H1 (cell line): ENCODE measurements at regions of chr1 and their contacts with region 1.

Region 1: DNA sequence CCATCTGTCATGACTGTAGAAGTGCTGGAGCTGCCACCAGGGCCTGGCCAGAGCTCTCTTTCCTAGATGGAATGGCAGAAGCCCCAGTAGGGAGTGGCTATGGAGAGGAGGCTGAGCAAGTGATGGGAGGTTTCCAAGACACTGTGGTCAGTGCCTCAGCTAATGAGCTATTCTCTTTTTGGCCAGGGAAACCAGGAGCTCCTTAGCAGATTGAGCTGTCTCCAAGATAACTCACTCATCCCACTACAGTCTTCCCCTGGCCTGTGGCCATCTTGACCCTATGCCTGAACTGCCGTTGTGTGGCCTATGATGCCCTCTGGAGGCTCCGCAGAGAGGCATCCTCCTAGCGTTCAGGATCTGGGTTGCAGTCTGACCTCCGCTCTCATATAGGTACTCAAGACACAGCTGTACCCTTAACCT is 60.5 kb downstream of the ERI3 start:
- DNase-seq: peak in 1 of 2 experiments; percentile 61
- H3K4me3 ChIP-seq: no peak overlapping the region
- H3K27ac ChIP-seq: no peak overlapping the region
- H3K4me1 ChIP-seq: peaks cover 0 to 2% (median 0%) of the 10 kb centered on the region in 4 experiments; a peak in 1 of 7 replicates
- H3K27me3 ChIP-seq: no peaks in the 10 kb centered on the region
- CTCF ChIP-seq: peak; percentile 81 to 99 (median 89)
- EP300 ChIP-seq: no peak
- POLR2A ChIP-seq: no peak
- RAD21 ChIP-seq: peak; percentile 84 to 87

Region 2: DNA sequence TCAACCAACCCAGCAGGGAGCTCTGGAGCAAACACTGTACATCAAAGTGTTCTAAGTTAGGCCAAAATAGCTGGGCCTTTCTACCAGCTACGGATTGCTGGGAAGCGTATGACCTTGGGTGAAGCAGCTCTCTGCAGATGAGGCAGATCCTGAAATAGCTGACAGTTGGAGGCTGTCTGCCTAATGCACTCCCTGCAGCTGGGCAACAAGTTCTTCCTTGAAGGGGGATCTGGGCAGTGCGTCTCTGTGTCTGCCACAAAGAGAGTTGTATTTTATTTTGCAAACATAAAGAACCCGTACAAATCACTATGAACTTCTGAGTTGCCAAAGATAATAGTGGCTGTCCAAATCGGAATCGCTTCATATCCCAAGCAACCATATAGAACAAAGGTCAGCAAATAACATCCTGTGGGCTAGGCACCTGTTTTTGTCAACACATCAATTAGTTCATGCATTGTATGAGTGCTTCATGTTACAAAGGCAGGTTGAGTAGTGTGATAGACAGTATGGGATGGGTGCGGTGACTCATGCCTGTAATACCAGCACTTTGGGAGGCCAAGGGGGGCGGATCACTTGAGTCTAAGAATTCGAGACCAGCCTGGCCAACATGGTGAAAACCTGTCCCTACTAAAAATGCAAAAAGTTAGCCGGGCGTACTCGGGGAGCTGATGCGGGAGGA is 205.1 kb before region 1 on chr1:
- CTCF ChIA-PET with region 1: interaction called, 41 read pairs
- POLR2A ChIA-PET with region 1: no interaction called
- DNase-seq: no peak
- H3K4me3 ChIP-seq: no peak overlapping the region
- H3K27ac ChIP-seq: no peak overlapping the region
- H3K4me1 ChIP-seq: peaks cover 8 to 19% (median 13%) of the 10 kb centered on the region in 4 experiments
- H3K27me3 ChIP-seq: peaks cover 0 to 2% (median 0%) of the 10 kb centered on the region in 4 experiments; a peak in 1 of 7 replicates
- CTCF ChIP-seq: no peak
- EP300 ChIP-seq: no peak
- POLR2A ChIP-seq: no peak
- RAD21 ChIP-seq: no peak

Region 3: GRCh38 chr1:44249543-44249942 is 45.1 kb before region 1 on chr1:
- CTCF ChIA-PET with region 1: interaction called, 12 read pairs
- POLR2A ChIA-PET with region 1: no interaction called
- DNase-seq: no peak
- H3K4me3 ChIP-seq: no peak overlapping the region
- H3K27ac ChIP-seq: no peak overlapping the region
- H3K4me1 ChIP-seq: peaks cover 0 to 2% (median 0%) of the 10 kb centered on the region in 4 experiments; a peak in 3 of 7 replicates
- H3K27me3 ChIP-seq: no peaks in the 10 kb centered on the region
- CTCF ChIP-seq: peak in 2 of 3 experiments; percentile 6 to 35; a peak in 2 of 4 replicates
- EP300 ChIP-seq: no peak
- POLR2A ChIP-seq: no peak
- RAD21 ChIP-seq: peak in 1 of 2 experiments; percentile 25; a peak in 3 of 4 replicates

Region 4: GRCh38 chr1:44270686-44271628 is 23.6 kb before region 1 on chr1:
- CTCF ChIA-PET with region 1: interaction called, 40 read pairs
- POLR2A ChIA-PET with region 1: no interaction called
- DNase-seq: no peak
- H3K4me3 ChIP-seq: no peak overlapping the region
- H3K27ac ChIP-seq: no peak overlapping the region
- H3K4me1 ChIP-seq: no peaks in the 10 kb centered on the region; a peak in 2 of 7 replicates
- H3K27me3 ChIP-seq: no peaks in the 10 kb centered on the region
- CTCF ChIP-seq: no peak
- EP300 ChIP-seq: no peak
- POLR2A ChIP-seq: no peak
- RAD21 ChIP-seq: no peak

Region 5: GRCh38 chr1:44305962-44306422 is 11.4 kb after region 1 on chr1:
- CTCF ChIA-PET with region 1: interaction called, 68 read pairs
- POLR2A ChIA-PET with region 1: no interaction called
- DNase-seq: no peak
- H3K4me3 ChIP-seq: no peak overlapping the region
- H3K27ac ChIP-seq: no peak overlapping the region
- H3K4me1 ChIP-seq: peaks cover 0 to 5% (median 0%) of the 10 kb centered on the region in 4 experiments; a peak in 3 of 7 replicates
- H3K27me3 ChIP-seq: no peaks in the 10 kb centered on the region
- CTCF ChIP-seq: no peak
- EP300 ChIP-seq: no peak
- POLR2A ChIP-seq: no peak
- RAD21 ChIP-seq: no peak

Region 6: DNA sequence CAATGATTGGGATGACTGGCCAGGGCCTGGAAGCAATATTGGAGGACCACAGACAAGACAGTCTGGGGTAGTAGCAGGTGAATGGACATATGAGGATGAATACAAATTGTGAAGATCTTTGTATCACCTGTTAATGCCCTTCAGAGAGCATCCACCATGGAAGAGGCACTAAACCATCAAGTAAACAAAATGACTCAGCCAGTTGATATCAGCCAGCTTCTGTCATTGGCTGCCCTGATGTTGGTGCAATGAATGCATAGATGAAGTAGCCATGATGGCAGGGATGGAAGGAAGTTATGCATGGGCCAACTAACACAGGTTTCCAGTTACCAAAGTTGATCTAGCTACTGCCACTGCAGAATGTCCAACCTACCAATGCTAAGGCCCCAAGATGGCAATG is 76.6 kb after region 1 on chr1:
- CTCF ChIA-PET with region 1: no interaction called
- POLR2A ChIA-PET with region 1: no interaction called
- DNase-seq: no peak
- H3K4me3 ChIP-seq: no peak overlapping the region
- H3K27ac ChIP-seq: no peak overlapping the region
- H3K4me1 ChIP-seq: peaks cover 0 to 7% (median 4%) of the 10 kb centered on the region in 4 experiments; a peak in 6 of 7 replicates
- H3K27me3 ChIP-seq: peaks cover 0 to 2% (median 0%) of the 10 kb centered on the region in 4 experiments; a peak in 2 of 7 replicates
- CTCF ChIP-seq: no peak
- EP300 ChIP-seq: no peak
- POLR2A ChIP-seq: no peak
- RAD21 ChIP-seq: no peak

Region 7: DNA sequence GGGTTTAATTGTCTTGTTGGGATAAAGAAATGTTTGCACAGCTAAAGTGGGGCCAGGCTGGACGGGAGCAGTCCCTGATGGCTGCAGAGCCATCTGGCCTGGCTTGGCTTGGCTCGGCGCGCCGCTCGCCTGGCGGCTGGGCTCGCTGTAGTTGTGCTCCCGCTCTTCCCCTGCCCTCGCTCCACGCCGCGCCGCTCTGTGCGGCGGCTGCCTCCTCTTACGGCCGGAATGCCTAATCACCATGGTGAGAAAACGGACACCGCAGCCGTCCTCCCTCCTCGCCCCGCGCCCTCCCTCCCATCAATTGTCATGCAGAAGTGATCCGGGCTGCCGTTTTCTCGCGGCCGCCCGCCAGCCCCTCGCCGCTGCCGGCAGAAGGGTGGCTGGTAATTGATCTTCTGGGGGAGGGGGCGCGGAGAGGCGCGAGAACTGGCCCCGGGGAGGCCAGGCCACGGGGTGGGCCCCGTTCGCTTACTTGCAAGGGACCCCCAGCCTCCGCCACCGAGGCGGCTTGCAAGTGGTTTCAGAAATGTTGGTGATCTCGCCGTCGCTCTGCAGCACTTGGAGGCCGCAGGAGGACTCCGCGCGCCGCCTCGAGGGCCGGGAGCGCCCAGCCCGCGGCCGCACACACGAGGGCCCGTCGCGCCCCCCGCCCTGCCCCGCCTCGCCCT is 122.9 kb after region 1 on chr1:
- CTCF ChIA-PET with region 1: no interaction called
- POLR2A ChIA-PET with region 1: no interaction called
- DNase-seq: peak; percentile 76 to 85
- H3K4me3 ChIP-seq: peak overlapping the region; percentile 44 to 69 (median 53)
- H3K27ac ChIP-seq: peak overlapping the region; percentile 17; the same call in 1 of the 2 replicates
- H3K4me1 ChIP-seq: peaks cover 8 to 26% (median 21%) of the 10 kb centered on the region in 4 experiments
- H3K27me3 ChIP-seq: peaks cover 0 to 10% (median 4%) of the 10 kb centered on the region in 4 experiments; a peak in 5 of 7 replicates
- CTCF ChIP-seq: no peak
- EP300 ChIP-seq: peak in 1 of 2 experiments; percentile 18; a peak in 1 of 3 replicates
- POLR2A ChIP-seq: no peak; a peak in 1 of 3 replicates
- RAD21 ChIP-seq: 0 out of 4 replicates have a peak, but pooled peaks have one; percentile 2 to 11

Region 8: DNA sequence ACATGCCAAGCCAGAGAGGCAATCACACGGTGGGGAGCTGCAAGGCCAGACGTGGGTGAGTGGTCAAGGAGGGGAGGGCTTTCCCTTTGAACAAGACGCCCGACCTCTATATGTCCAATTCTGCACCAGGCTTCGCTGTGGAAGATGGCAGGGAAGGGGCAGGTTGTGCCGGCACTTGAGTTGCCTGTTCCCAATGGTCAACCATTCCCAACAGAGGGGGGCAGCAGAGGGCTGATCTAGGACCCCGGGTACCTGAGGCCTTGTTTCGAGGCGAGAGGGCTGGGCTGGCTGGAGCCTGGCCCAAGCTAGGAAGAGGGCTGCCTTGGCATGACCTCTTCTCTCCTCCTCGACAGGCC is 314.8 kb after region 1 on chr1:
- CTCF ChIA-PET with region 1: interaction called, 16 read pairs
- POLR2A ChIA-PET with region 1: no interaction called
- DNase-seq: peak; percentile 67 to 93
- H3K4me3 ChIP-seq: no peak overlapping the region
- H3K27ac ChIP-seq: no peak overlapping the region
- H3K4me1 ChIP-seq: peaks cover 2 to 18% (median 11%) of the 10 kb centered on the region in 4 experiments; a peak in 6 of 7 replicates
- H3K27me3 ChIP-seq: no peaks in the 10 kb centered on the region
- CTCF ChIP-seq: peak; percentile 78 to 86 (median 84)
- EP300 ChIP-seq: no peak
- POLR2A ChIP-seq: no peak
- RAD21 ChIP-seq: peak; percentile 71 to 83